H1 (cell line): ENCODE measurements at regions of chr11 and their contacts with region 1.

Region 1: GRCh38 chr11:34512840-34513681 is 533 bp downstream of the ELF5 start:
- DNase-seq: peak; percentile 54 to 78
- H3K4me3 ChIP-seq: no peak overlapping the region
- H3K27ac ChIP-seq: no peak overlapping the region
- H3K4me1 ChIP-seq: peaks cover 0 to 9% (median 5%) of the 10 kb centered on the region in 4 experiments; a peak in 4 of 7 replicates
- H3K27me3 ChIP-seq: no peaks in the 10 kb centered on the region
- CTCF ChIP-seq: peak; percentile 87 to 95 (median 89)
- EP300 ChIP-seq: no peak
- POLR2A ChIP-seq: no peak
- RAD21 ChIP-seq: peak; percentile 47 to 62

Region 2: GRCh38 chr11:33857933-33858371 is 655.1 kb before region 1 on chr11:
- CTCF ChIA-PET with region 1: no interaction called
- POLR2A ChIA-PET with region 1: no interaction called
- DNase-seq: peak; percentile 59 to 92
- H3K4me3 ChIP-seq: no peak overlapping the region
- H3K27ac ChIP-seq: no peak overlapping the region
- H3K4me1 ChIP-seq: peaks cover 0 to 4% (median under 1%) of the 10 kb centered on the region in 4 experiments; a peak in 2 of 7 replicates
- H3K27me3 ChIP-seq: peaks cover 0 to 3% (median 0%) of the 10 kb centered on the region in 4 experiments; a peak in 1 of 7 replicates
- CTCF ChIP-seq: peak; percentile 91 to 96 (median 91)
- EP300 ChIP-seq: no peak
- POLR2A ChIP-seq: no peak
- RAD21 ChIP-seq: peak; percentile 98

Region 3: GRCh38 chr11:34438529-34439507 is 74.2 kb before region 1 on chr11 and contains the start of gene CAT:
- CTCF ChIA-PET with region 1: no interaction called
- POLR2A ChIA-PET with region 1: no interaction called
- DNase-seq: peak in 1 of 2 experiments; percentile 98
- H3K4me3 ChIP-seq: peak within 1 kb of the TSS; percentile 58 to 94 (median 63)
- H3K27ac ChIP-seq: peak within 1 kb of the TSS; percentile 48; the same call in 1 of the 2 replicates
- H3K4me1 ChIP-seq: no peaks in the 10 kb centered on the region
- H3K27me3 ChIP-seq: no peaks in the 10 kb centered on the region
- CTCF ChIP-seq: no peak
- EP300 ChIP-seq: no peak
- POLR2A ChIP-seq: no peak
- RAD21 ChIP-seq: no peak
- total RNA-seq, gene CAT: 14.3 and 15.0 TPM in 2 replicates

Region 4: GRCh38 chr11:34501500-34501899 is 11.6 kb before region 1 on chr11:
- CTCF ChIA-PET with region 1: interaction called, 46 read pairs
- POLR2A ChIA-PET with region 1: no interaction called
- DNase-seq: no peak
- H3K4me3 ChIP-seq: no peak overlapping the region
- H3K27ac ChIP-seq: no peak overlapping the region
- H3K4me1 ChIP-seq: no peaks in the 10 kb centered on the region
- H3K27me3 ChIP-seq: no peaks in the 10 kb centered on the region
- CTCF ChIP-seq: no peak
- EP300 ChIP-seq: no peak
- POLR2A ChIP-seq: no peak
- RAD21 ChIP-seq: no peak

Region 5: GRCh38 chr11:34531663-34532062 is 18.6 kb after region 1 on chr11:
- CTCF ChIA-PET with region 1: interaction called, 72 read pairs
- POLR2A ChIA-PET with region 1: no interaction called
- DNase-seq: no peak
- H3K4me3 ChIP-seq: no peak overlapping the region
- H3K27ac ChIP-seq: no peak overlapping the region
- H3K4me1 ChIP-seq: no peaks in the 10 kb centered on the region
- H3K27me3 ChIP-seq: no peaks in the 10 kb centered on the region
- CTCF ChIP-seq: no peak
- EP300 ChIP-seq: no peak
- POLR2A ChIP-seq: no peak
- RAD21 ChIP-seq: no peak

Region 6: DNA sequence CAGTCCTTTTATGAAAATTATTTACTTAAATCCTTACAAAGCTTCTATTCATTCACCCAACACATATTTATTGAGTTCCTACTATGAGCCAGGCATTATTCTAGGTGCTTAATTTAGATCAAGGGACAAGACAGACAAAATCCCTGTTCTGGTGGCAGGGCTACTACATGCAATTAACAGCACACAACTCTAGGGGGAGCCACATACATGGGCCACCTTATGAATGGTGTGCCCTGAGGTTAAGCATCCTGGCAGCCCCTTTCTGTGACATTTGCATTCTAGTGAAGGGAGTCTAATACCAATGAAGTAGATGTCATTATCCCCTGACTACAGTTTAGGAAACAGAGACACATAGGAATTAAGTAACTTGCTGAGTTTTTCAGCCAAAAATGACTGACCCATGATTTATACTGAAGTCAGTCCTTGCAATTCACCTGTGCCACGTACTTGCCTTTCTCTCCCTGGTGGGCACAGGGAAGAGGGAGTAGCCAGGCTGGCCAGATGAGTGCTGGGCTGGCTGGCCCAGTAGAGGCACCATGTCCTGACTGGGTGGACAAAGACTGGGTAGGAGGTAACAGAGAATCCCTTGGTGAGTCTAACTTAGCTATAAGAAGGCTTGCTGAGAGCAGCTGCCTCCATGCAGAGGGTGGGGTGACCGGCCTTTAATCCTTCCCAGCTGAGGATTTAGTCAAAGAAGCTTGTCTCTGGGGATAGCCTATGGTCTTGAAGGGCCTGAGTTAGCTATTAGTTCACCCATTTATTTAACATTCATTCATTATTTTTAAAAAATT is 52.6 kb after region 1 on chr11:
- CTCF ChIA-PET with region 1: interaction called, 15 read pairs
- POLR2A ChIA-PET with region 1: no interaction called
- DNase-seq: peak in 1 of 2 experiments; percentile 17
- H3K4me3 ChIP-seq: no peak overlapping the region
- H3K27ac ChIP-seq: no peak overlapping the region
- H3K4me1 ChIP-seq: 0 out of 7 replicates have a peak, but pooled peaks cover 0 to 2% (median 0%) of the 10 kb centered on the region in 4 experiments
- H3K27me3 ChIP-seq: no peaks in the 10 kb centered on the region
- CTCF ChIP-seq: peak; percentile 60 to 89 (median 77)
- EP300 ChIP-seq: no peak
- POLR2A ChIP-seq: no peak
- RAD21 ChIP-seq: peak; percentile 86 to 90

Region 7: GRCh38 chr11:34749666-34750659 is 236.9 kb after region 1 on chr11:
- CTCF ChIA-PET with region 1: no interaction called
- POLR2A ChIA-PET with region 1: no interaction called
- DNase-seq: no peak
- H3K4me3 ChIP-seq: no peak overlapping the region
- H3K27ac ChIP-seq: no peak overlapping the region
- H3K4me1 ChIP-seq: no peaks in the 10 kb centered on the region
- H3K27me3 ChIP-seq: no peaks in the 10 kb centered on the region
- CTCF ChIP-seq: no peak
- EP300 ChIP-seq: no peak
- POLR2A ChIP-seq: no peak
- RAD21 ChIP-seq: no peak